Right lobe of liver (tissue), 6 donors: ENCODE measurements at regions of chr9 and their contacts with region 1.

Region 1: GRCh38 chr9:69056191-69056815 is 20.8 kb downstream of the FXN start:
- DNase-seq: no peak
- ATAC-seq: no peak
- H3K4me3 ChIP-seq: no peak overlapping the region
- H3K27ac ChIP-seq: no peak overlapping the region
- H3K4me1 ChIP-seq: no peaks in the 10 kb centered on the region
- H3K27me3 ChIP-seq: no peaks in the 10 kb centered on the region
- CTCF ChIP-seq: no peak
- POLR2A ChIP-seq: no peak

Region 2: DNA sequence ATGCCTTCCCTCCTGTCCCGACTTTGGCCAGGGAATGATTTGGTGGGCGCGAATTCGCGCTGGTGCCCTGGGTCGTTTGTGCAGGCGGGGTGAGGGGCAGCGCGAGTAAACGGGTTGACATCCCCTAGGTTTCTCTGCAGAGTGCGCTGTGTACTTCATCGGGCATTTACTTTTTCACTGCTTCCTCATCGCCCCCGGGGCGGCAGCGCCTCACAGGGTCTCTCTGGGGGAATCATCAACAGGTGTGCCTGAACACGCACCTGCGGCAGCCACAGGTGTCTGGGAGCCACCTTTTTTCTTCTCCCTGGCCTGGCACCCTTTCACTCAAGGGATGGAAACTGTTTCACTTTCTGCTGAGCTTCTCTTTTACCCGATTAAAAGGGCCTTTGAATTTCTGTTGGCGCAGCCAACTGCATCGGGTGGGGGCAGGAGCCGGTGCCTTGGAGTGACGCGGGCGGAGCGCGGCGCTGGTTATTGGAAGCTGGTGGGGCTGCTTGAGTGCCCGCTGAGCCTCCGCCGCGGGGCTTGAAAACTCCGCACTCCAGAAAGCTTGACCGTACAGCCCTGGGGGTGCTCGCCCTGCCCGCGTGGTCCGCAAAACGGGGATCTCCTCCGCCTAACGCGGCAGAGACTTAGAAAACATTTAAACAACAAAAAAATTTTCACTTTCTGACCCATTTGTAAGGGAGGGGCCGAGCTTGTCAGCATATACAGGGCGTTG is 65.7 kb after region 1 on chr9:
- intact Hi-C with region 1: loop called in 1 of 2 experiments (anchors 10 kb)
- DNase-seq: peak; percentile 77 to 82 (median 81)
- ATAC-seq: peak; percentile 69 to 81 (median 74)
- H3K4me3 ChIP-seq: peak overlapping the region; percentile 63 to 87 (median 87)
- H3K27ac ChIP-seq: peak overlapping the region; percentile 89 to 97 (median 91)
- H3K4me1 ChIP-seq: peaks cover 0 to 14% (median 4%) of the 10 kb centered on the region in 4 donors
- H3K27me3 ChIP-seq: no peaks in the 10 kb centered on the region
- CTCF ChIP-seq: no peak
- POLR2A ChIP-seq: no peak

Region 3: GRCh38 chr9:69199769-69200470 is 143.6 kb after region 1 on chr9:
- intact Hi-C with region 1: loop called (anchors 10 kb)
- DNase-seq: no peak
- ATAC-seq: peak in 1 of 4 donors; percentile 47
- H3K4me3 ChIP-seq: no peak overlapping the region
- H3K27ac ChIP-seq: no peak overlapping the region
- H3K4me1 ChIP-seq: peaks cover 0 to 47% (median 15%) of the 10 kb centered on the region in 4 donors
- H3K27me3 ChIP-seq: no peaks in the 10 kb centered on the region
- CTCF ChIP-seq: no peak
- POLR2A ChIP-seq: no peak